Mucosa of descending colon (tissue), 3 donors: ENCODE measurements at regions of chr7 and their contacts with region 1.

Region 1: DNA sequence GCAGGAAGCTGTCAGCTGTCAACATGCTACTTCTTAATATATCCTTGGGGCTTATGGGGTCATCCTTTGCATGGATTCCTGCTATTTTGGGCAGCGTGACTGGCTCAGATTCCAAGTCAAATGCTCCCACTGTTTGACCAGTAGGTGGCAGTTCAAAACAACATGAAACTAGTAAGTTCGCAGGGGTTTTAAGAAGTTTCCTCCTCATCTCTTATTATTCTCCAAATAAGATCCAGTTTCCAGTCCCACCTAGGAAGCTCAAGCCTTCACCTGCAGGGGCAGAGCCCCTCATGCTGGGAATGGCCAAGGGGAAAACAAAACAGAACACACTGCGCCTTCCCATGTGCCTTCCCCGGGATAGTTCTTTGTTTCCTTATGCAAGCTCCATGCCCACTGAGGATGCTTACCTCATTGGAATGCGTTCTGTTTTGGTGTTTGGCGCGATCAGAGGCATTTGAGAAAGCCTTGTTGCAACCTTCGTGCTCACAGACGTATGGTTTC is 259.8 kb downstream of the GLI3 start:
- DNase-seq: peak in 1 of 3 donors; percentile 31
- ATAC-seq: peak; percentile 26
- H3K4me3 ChIP-seq: no peak overlapping the region
- H3K4me1 ChIP-seq: no peaks in the 10 kb centered on the region
- CTCF ChIP-seq: peak; percentile 32

Region 2: GRCh38 chr7:42237162-42237821 is 260.1 kb after region 1 on chr7 and contains the start of gene GLI3:
- intact Hi-C with region 1: loop called in 1 of 2 experiments (anchors 5 kb)
- DNase-seq: peak; percentile 53 to 81 (median 61)
- ATAC-seq: peak; percentile 69
- H3K4me3 ChIP-seq: peak within 1 kb of the TSS; percentile 17
- H3K4me1 ChIP-seq: peaks cover 5% of the 10 kb centered on the region
- CTCF ChIP-seq: no peak
- total RNA-seq, gene GLI3: 3.0 to 56.3 (median 8.8) TPM